ENCODE measurements at regions of chr1 and their contacts with region 1.

Region 1: DNA sequence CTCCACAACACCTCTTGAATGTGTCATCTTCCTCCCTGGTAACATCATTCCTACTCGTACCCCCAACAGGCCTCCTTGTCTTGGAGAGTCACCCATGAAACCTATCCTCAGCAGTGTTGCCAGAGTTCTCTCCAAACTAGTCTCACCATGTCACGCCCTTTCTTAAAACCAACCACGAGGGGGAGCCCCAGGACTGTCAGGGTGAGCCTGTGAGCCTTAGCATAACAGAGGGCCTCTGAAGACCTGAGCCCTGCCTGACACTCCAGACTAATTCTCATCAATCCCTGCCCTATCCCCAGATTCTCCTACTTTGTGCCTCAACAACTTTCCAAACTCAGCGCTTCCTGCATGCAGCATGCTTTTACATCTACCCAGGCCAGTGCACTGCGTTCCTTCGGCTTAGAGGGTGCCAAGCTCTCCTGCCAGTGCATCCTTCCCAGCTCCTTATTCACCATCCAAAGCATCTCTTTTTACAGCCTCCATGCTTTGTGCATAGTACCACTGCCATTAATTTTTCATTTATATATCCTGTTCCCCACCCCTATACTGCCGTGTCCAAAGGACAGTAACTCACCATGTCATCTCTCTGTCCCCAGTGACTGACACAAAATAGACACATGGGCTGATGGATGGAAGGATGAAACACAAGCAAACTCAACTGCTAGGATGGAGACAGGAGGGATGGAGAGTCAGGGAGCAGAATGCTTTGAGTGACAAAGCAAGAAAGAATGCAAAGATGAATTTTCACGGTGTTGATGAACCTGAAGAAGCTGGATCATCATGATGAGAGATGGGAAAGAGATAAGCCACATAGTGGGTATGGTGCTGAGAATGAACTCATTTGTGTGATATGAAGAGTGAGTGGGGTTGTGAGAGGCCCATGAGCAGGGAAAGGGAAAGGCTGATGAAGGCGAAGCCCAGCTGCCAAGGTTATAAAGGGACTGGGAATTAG is 34.0 kb downstream of the ZNF697 start:
- DNase-seq: peak; percentile 75
- H3K4me3 ChIP-seq: no peak overlapping the region
- H3K27ac ChIP-seq: no peak overlapping the region
- H3K27me3 ChIP-seq: peaks cover 3% of the 10 kb centered on the region
- CTCF ChIP-seq: peak; percentile 84

Region 2: GRCh38 chr1:119631433-119632102 is 17.5 kb after region 1 on chr1:
- CTCF ChIA-PET with region 1: interaction called, 10 read pairs
- POLR2A ChIA-PET with region 1: interaction called, 3 read pairs
- DNase-seq: peak; percentile 34
- H3K4me3 ChIP-seq: peak overlapping the region; percentile 11; the same call in 1 of the 2 replicates
- H3K27ac ChIP-seq: peak overlapping the region; percentile 55
- H3K27me3 ChIP-seq: no peaks in the 10 kb centered on the region
- CTCF ChIP-seq: no peak

Region 3: GRCh38 chr1:119656410-119656955 is 42.4 kb after region 1 on chr1:
- CTCF ChIA-PET with region 1: interaction called, 83 read pairs
- POLR2A ChIA-PET with region 1: no interaction called
- DNase-seq: no peak
- H3K4me3 ChIP-seq: no peak overlapping the region
- H3K27ac ChIP-seq: no peak overlapping the region
- H3K27me3 ChIP-seq: peaks cover 4% of the 10 kb centered on the region
- CTCF ChIP-seq: no peak

Region 4: GRCh38 chr1:119662034-119662437 is 48.0 kb after region 1 on chr1:
- CTCF ChIA-PET with region 1: interaction called, 83 read pairs
- POLR2A ChIA-PET with region 1: no interaction called
- DNase-seq: no peak
- H3K4me3 ChIP-seq: no peak overlapping the region
- H3K27ac ChIP-seq: no peak overlapping the region
- H3K27me3 ChIP-seq: peaks cover 3% of the 10 kb centered on the region
- CTCF ChIP-seq: no peak